Sciatic nerve (tissue), 2 donors: ENCODE measurements at regions of chr3 and their contacts with region 1.

Region 1: GRCh38 chr3:148420242-148420641 is 277.5 kb upstream of the AGTR1 start:
- DNase-seq: no peak
- ATAC-seq: no peak

Region 2: GRCh38 chr3:146991907-146992306 is 1428.3 kb before region 1 on chr3:
- intact Hi-C with region 1: no loop called
- DNase-seq: no peak
- ATAC-seq: no peak

Region 3: GRCh38 chr3:148136816-148137215 is 283.4 kb before region 1 on chr3:
- intact Hi-C with region 1: no loop called
- DNase-seq: no peak
- ATAC-seq: no peak

Region 4: DNA sequence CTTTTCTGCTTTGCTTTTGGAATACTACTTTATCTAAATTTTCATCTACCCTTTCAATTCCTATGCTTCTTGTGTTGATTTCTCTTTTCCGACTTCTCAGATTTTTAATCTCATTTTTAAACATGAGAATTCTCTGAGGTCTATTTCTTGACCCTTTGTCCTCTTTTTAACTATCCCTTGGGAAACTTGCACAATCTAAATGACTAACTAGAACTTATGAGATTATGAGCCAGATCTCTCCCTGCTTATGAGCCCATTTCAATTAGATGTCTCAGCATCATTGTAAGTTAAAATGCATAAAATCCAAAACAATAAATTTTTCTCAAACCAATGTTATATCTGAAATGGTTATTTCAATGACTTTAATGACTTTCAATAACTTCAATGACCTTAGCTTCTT is 19.5 kb before region 1 on chr3:
- intact Hi-C with region 1: loop called (anchors 1 kb)
- DNase-seq: no peak
- ATAC-seq: no peak